ENCODE measurements at regions of chr9 and their contacts with region 1.

Region 1: DNA sequence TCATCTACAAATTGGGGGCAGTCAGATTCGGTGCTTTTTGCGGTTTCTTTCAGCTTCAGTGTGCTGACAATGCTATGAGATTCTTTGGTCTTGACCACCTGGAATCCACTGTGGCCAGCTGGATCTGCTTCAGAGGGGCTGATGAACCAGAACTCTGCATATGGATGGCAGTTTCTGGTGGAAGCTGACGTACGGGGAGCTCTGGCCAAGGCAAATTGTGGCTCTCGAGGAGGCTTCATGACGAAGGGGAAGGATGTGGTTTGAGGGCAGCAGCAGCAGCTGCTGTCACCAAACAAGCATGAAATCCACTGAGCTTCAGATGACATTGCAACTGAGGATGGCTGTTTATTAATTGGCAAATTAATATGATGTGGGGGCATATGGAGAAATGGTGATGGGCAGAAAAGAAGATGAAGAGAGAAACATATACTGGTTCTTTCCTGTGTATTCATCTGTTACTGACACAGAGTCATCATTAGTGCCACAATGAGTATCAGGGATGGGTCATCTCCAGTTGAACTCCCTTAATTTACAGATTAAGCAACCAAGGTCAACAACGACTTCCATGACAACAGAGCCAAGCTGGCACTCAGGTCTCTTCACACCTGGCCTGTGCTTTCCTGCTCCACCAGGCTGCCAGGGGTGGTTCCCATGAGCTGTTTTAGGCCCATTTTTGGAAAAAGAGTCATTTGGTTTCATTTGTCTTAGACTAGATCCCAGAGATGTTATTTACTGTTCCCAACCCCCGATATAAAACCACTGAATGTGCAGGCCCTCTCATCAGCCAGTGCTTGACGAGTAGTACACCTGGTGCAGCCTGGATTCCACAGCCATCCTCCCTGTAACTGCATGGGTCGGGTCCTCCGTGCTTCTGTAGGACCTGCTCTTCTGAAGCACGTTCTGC is 134.7 kb downstream of the AOPEP start:
- DNase-seq: peak; percentile 90
- ATAC-seq: peak; percentile 91
- H3K4me3 ChIP-seq: peak overlapping the region in 3 of 5 experiments; percentile 17 to 42 (median 22)
- H3K4me3 Mint-ChIP-seq: peak overlapping the region; percentile 65
- H3K27ac ChIP-seq: peak overlapping the region in 1 of 2 donors; percentile 10
- H3K27ac Mint-ChIP-seq: peak overlapping the region; percentile 81
- H3K4me1 ChIP-seq: peaks cover 25 to 26% of the 10 kb centered on the region in 2 donors
- H3K4me1 Mint-ChIP-seq: peaks cover 45% of the 10 kb centered on the region
- H3K27me3 ChIP-seq: no peaks in the 10 kb centered on the region
- H3K27me3 Mint-ChIP-seq: no peaks in the 10 kb centered on the region
- CTCF ChIP-seq: no peak

Region 2: GRCh38 chr9:94767331-94768072 is 93.7 kb before region 1 on chr9:
- CTCF ChIA-PET with region 1: no interaction called
- POLR2A ChIA-PET with region 1: no interaction called
- intact Hi-C with region 1: no loop called
- DNase-seq: no peak
- ATAC-seq: no peak
- H3K4me3 ChIP-seq: no peak overlapping the region
- H3K4me3 Mint-ChIP-seq: no peak overlapping the region
- H3K27ac ChIP-seq: no peak overlapping the region
- H3K27ac Mint-ChIP-seq: no peak overlapping the region
- H3K4me1 ChIP-seq: no peaks in the 10 kb centered on the region
- H3K4me1 Mint-ChIP-seq: peaks cover 7% of the 10 kb centered on the region
- H3K27me3 ChIP-seq: no peaks in the 10 kb centered on the region
- H3K27me3 Mint-ChIP-seq: no peaks in the 10 kb centered on the region
- CTCF ChIP-seq: no peak

Region 3: DNA sequence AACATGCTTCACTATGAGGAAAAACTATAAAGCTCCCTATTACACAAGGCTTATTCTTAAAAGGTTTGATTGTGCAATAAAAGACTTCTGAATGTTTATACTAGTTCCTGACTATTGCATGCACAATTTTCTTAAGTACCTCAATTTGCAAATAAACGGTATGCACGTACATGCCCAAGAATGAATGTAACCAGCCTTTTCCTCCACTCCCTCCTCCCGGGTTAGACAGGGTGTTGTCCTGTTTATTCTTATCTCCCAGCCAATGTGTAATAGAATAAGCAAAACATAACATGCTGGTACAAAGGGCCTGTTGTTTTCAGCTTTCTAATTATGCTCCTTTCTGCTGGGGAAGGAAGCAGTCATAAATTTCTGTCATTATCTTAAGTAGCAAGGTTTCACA is 55.6 kb before region 1 on chr9:
- CTCF ChIA-PET with region 1: no interaction called
- POLR2A ChIA-PET with region 1: no interaction called
- intact Hi-C with region 1: no loop called
- DNase-seq: no peak
- ATAC-seq: no peak
- H3K4me3 ChIP-seq: no peak overlapping the region
- H3K4me3 Mint-ChIP-seq: no peak overlapping the region
- H3K27ac ChIP-seq: no peak overlapping the region
- H3K27ac Mint-ChIP-seq: no peak overlapping the region
- H3K4me1 ChIP-seq: peaks cover 5% of the 10 kb centered on the region in 2 donors
- H3K4me1 Mint-ChIP-seq: peaks cover 16% of the 10 kb centered on the region
- H3K27me3 ChIP-seq: no peaks in the 10 kb centered on the region
- H3K27me3 Mint-ChIP-seq: no peaks in the 10 kb centered on the region
- CTCF ChIP-seq: no peak

Region 4: GRCh38 chr9:94882966-94883641 is 21.9 kb after region 1 on chr9:
- CTCF ChIA-PET with region 1: interaction called, 8 read pairs
- POLR2A ChIA-PET with region 1: interaction called, 5 read pairs
- intact Hi-C with region 1: loop called (anchors 1 kb)
- DNase-seq: no peak
- ATAC-seq: no peak
- H3K4me3 ChIP-seq: no peak overlapping the region
- H3K4me3 Mint-ChIP-seq: no peak overlapping the region
- H3K27ac ChIP-seq: no peak overlapping the region
- H3K27ac Mint-ChIP-seq: no peak overlapping the region
- H3K4me1 ChIP-seq: peaks cover 13 to 16% of the 10 kb centered on the region in 2 donors
- H3K4me1 Mint-ChIP-seq: peaks cover 30% of the 10 kb centered on the region
- H3K27me3 ChIP-seq: no peaks in the 10 kb centered on the region
- H3K27me3 Mint-ChIP-seq: no peaks in the 10 kb centered on the region
- CTCF ChIP-seq: no peak